ENCODE measurements at regions of chr16 and their contacts with region 1.

Region 1: GRCh38 chr16:4253394-4254150 is 11.7 kb upstream of the SRL start:
- DNase-seq: peak; percentile 92 to 100 (median 98)

Region 2: DNA sequence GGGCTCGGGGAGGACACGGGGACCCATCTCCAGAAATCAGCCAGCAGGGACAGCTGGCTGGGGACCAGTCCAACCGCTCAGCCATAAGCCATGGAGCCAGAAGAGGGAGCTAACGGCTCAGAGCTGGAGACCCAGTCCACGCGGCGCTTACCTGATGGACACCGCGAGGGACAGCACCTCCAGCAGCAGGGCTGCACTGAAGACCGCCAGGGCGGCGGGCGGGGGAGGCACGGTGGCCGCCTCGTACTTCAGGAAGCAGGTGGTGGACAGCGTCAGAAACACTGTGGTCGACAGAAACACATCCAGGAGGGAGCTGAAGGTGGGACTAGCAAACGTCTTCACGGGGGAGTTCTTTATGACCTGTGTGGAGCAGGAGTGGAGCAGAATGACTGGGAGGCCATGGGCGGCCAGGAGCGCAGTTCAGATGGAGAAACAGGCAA is 270.5 kb before region 1 on chr16:
- intact Hi-C with region 1: loop called (anchors 5 kb)
- DNase-seq: peak; percentile 40 to 95 (median 74)

Region 3: GRCh38 chr16:4116337-4117249 is 137.0 kb before region 1 on chr16 and contains the start of gene ADCY9:
- intact Hi-C with region 1: no loop called
- DNase-seq: peak; percentile 53 to 96 (median 64)

Region 4: GRCh38 chr16:4160658-4161430 is 92.7 kb before region 1 on chr16:
- intact Hi-C with region 1: no loop called
- DNase-seq: no peak

Region 5: GRCh38 chr16:4183237-4184036 is 70.1 kb before region 1 on chr16:
- intact Hi-C with region 1: loop called (anchors 1 kb)
- DNase-seq: peak; percentile 84 to 99 (median 90)

Region 6: DNA sequence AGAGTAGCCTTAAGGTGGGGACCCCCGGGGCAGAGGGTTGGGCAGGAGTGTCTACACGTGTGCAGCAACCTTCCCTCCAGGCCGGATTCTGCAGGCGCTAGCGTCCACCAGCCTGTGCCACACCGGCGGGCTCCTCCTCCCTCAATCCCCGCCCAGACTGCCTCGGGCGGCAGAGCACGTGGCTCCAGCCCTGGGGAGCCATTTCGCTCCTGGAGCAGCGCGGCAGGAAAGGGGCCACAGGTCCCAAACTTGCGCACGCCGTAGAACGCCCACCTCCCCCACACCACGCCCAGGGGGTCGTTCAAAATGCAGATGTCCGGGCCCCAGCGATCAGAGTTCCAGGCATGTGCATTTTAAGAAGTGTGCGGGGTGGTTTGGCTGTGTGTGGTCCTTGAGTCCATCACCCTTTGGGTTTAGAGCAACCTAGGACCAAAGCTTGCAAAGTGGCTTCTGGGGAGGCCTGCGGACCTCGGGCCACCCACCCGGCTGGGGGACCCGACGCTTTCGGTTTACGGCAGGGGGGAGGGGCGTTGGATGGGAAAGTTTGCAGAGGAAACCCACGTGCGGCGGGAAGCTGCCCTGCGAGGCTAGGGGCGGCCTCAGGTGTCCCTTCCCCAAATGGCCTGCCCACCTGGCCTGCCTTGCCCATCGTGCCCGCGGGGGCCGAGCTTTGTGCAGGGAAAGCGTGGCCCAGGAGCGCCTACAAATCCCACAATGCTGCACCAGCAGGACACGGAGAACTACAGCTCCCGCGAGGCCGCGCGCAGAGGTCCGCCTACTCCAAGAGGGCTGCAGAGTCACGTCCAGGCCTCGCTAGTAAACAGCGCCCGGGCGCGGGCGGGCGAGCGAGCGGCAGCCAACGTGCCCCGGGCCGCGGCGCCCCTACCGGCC is 17.8 kb after region 1 on chr16:
- intact Hi-C with region 1: loop called (anchors 2 kb)
- DNase-seq: peak; percentile 90 to 99 (median 96)

Measured in posterior cingulate gyrus (tissue), 11 donors.